B cell (primary cell): ENCODE measurements at regions of chr11 and their contacts with region 1.

Region 1: DNA sequence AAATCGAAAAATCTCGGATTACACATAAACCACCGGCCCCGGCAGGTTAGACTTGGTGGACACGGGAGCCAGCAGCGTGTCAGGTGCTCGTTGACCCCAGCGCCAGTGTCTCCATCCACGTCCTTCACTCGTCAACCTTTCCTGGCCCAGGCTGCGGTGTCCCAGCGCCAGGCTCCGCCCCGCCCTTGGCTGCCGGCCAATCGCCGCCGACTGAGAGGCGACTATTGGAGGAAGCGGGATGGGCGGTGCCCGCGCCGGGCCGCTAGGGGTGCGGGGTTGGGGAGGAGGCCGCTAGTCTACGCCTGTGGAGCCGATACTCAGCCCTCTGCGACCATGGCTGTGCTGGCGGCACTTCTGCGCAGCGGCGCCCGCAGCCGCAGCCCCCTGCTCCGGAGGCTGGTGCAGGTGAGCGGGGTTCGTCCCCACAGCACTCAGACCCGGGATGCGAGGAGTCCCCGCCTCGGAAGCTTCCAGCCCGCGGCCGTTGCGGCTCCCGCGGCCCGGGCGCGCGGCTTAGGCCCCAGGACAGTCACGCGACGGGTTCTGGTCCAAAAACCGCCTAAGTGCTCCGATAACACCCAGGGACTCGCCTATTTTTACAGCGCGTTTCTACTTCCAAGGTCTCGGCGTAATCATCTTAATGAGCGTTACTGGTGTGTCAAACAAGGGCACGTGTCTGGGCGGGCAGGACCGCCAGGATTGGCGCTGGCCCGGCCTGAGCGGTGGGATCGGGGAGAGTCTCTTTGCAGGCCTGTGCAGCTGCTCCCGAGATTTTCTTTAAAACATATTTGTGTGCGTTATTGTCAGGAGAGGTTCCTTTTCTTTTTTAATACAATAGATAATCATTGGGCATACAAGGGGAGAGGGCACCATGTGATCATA is at the start of gene ACAT1:
- DNase-seq: peak; percentile 92
- ATAC-seq: peak; percentile 100
- H3K4me3 ChIP-seq: peak within 1 kb of the TSS; percentile 60 to 93 (median 86)
- H3K4me3 Mint-ChIP-seq: peak within 1 kb of the TSS; percentile 92
- H3K27ac ChIP-seq: peak within 1 kb of the TSS; percentile 46 to 53
- H3K27ac Mint-ChIP-seq: peak within 1 kb of the TSS; percentile 78
- H3K4me1 ChIP-seq: peaks cover 17 to 26% of the 10 kb centered on the region in 2 donors
- H3K4me1 Mint-ChIP-seq: peaks cover 34% of the 10 kb centered on the region
- H3K27me3 ChIP-seq: no peaks in the 10 kb centered on the region
- H3K27me3 Mint-ChIP-seq: no peaks in the 10 kb centered on the region
- CTCF ChIP-seq: peak; percentile 36
- total RNA-seq, gene ACAT1: 31.1 and 32.9 TPM in 2 replicates

Region 2: GRCh38 chr11:107928046-107928766 is 193.3 kb before region 1 on chr11 and contains the start of gene RAB39A:
- CTCF ChIA-PET with region 1: no interaction called
- POLR2A ChIA-PET with region 1: no interaction called
- intact Hi-C with region 1: loop called (anchors 2 kb)
- DNase-seq: peak; percentile 94
- ATAC-seq: peak; percentile 85
- H3K4me3 ChIP-seq: peak within 1 kb of the TSS; percentile 44 to 89 (median 74)
- H3K4me3 Mint-ChIP-seq: peak within 1 kb of the TSS; percentile 88
- H3K27ac ChIP-seq: peak within 1 kb of the TSS; percentile 37 to 52
- H3K27ac Mint-ChIP-seq: peak within 1 kb of the TSS; percentile 88
- H3K4me1 ChIP-seq: peaks cover 16 to 19% of the 10 kb centered on the region in 2 donors
- H3K4me1 Mint-ChIP-seq: peaks cover 30% of the 10 kb centered on the region
- H3K27me3 ChIP-seq: peaks cover 0 to 3% (median 0%) of the 10 kb centered on the region in 4 experiments
- H3K27me3 Mint-ChIP-seq: peaks cover 5% of the 10 kb centered on the region
- CTCF ChIP-seq: no peak
- total RNA-seq, gene RAB39A: 2.4 TPM in 2 replicates

Region 3: DNA sequence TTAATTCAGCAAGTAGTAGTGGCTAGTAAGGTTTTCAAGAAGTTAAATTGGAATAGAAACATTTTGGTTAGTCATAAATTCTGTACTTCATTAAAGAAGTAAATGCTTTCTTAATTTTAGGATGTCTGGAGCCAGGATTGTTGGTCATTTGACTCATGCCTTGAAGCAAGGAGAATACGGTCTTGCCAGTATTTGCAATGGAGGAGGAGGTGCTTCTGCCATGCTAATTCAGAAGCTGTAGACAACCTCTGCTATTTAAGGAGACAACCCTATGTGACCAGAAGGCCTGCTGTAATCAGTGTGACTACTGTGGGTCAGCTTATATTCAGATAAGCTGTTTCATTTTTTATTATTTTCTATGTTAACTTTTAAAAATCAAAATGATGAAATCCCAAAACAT is 25.6 kb after region 1 on chr11:
- CTCF ChIA-PET with region 1: interaction called, 3 read pairs
- POLR2A ChIA-PET with region 1: interaction called, 10 read pairs
- intact Hi-C with region 1: no loop called
- DNase-seq: no peak
- ATAC-seq: no peak
- H3K4me3 ChIP-seq: no peak overlapping the region
- H3K4me3 Mint-ChIP-seq: no peak overlapping the region
- H3K27ac ChIP-seq: no peak overlapping the region
- H3K27ac Mint-ChIP-seq: no peak overlapping the region
- H3K4me1 ChIP-seq: no peaks in the 10 kb centered on the region
- H3K4me1 Mint-ChIP-seq: no peaks in the 10 kb centered on the region
- H3K27me3 ChIP-seq: no peaks in the 10 kb centered on the region
- H3K27me3 Mint-ChIP-seq: no peaks in the 10 kb centered on the region
- CTCF ChIP-seq: no peak

Region 4: DNA sequence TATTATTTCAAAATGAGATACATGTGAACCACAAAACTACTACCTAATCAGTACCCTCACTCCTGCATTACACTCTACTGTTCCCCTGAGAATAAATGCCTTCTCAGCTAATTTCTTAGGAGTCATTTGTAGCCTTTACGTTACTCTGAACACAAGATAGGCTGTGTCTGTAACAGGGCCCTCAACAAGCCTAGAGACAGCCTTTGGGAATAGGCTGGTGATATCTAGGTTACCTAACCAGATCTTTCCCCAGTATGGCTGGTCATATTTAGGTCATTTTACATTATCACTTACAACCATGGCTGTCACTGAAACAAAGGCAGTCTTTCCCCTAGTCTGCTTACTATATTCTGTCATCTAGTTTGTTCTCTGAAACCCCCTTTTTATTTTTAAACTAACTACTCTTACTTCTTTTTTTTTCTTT is 115.6 kb after region 1 on chr11:
- CTCF ChIA-PET with region 1: no interaction called
- POLR2A ChIA-PET with region 1: no interaction called
- intact Hi-C with region 1: loop called (anchors 5 kb)
- DNase-seq: peak; percentile 52
- ATAC-seq: peak; percentile 26
- H3K4me3 ChIP-seq: peak overlapping the region in 3 of 5 experiments; percentile 11 to 57 (median 33)
- H3K4me3 Mint-ChIP-seq: peak overlapping the region; percentile 72
- H3K27ac ChIP-seq: peak overlapping the region; percentile 83 to 90
- H3K27ac Mint-ChIP-seq: peak overlapping the region; percentile 86
- H3K4me1 ChIP-seq: peaks cover 27 to 45% of the 10 kb centered on the region in 2 donors
- H3K4me1 Mint-ChIP-seq: peaks cover 43% of the 10 kb centered on the region
- H3K27me3 ChIP-seq: no peaks in the 10 kb centered on the region
- H3K27me3 Mint-ChIP-seq: no peaks in the 10 kb centered on the region
- CTCF ChIP-seq: no peak

Region 5: DNA sequence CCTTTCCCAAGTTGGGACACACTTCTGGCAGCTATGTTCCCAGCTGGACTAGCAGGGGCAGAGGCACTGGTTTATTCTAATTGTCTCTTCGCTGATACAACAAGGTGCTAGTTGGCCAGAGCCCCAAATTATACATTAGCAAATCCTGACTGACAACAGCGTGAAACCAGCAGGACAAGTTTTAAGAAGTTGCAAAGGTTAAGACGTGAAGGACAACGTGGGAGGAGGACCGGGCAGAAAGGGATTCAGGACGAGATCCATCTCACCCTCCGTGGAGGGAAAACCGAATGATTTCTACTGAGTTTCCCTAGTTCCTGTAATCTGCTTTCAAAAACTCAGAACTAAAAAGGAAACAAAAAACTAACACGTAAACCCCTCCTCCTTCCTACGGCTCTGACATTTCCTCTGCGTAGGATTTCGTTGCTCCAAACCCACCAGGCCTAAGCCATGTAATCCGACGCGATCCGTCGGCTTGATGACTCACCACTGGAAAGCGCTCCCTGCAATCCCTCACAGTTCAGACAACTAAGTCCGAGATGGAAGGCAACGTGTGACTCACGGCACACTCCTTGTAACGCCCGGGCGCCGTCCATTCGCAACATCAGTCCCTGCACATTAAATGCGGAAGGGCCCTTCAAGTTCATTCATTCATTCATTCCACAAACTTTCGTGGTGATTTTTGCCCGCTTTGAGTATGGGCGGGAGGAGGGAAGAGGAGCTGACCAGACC is 376.0 kb after region 1 on chr11:
- CTCF ChIA-PET with region 1: no interaction called
- POLR2A ChIA-PET with region 1: no interaction called
- intact Hi-C with region 1: loop called (anchors 10 kb)
- DNase-seq: peak; percentile 80
- ATAC-seq: peak; percentile 67
- H3K4me3 ChIP-seq: peak overlapping the region; percentile 71 to 93 (median 80)
- H3K4me3 Mint-ChIP-seq: peak overlapping the region; percentile 100
- H3K27ac ChIP-seq: peak overlapping the region; percentile 71 to 80
- H3K27ac Mint-ChIP-seq: peak overlapping the region; percentile 98
- H3K4me1 ChIP-seq: peaks cover 0 to 7% of the 10 kb centered on the region in 2 donors
- H3K4me1 Mint-ChIP-seq: peaks cover 13% of the 10 kb centered on the region
- H3K27me3 ChIP-seq: no peaks in the 10 kb centered on the region
- H3K27me3 Mint-ChIP-seq: no peaks in the 10 kb centered on the region
- CTCF ChIP-seq: no peak

Region 6: GRCh38 chr11:108664730-108665525 is 543.4 kb after region 1 on chr11 and contains the start of gene DDX10:
- CTCF ChIA-PET with region 1: interaction called, 4 read pairs
- POLR2A ChIA-PET with region 1: no interaction called
- intact Hi-C with region 1: loop called (anchors 1 kb)
- DNase-seq: peak; percentile 99
- ATAC-seq: peak; percentile 100
- H3K4me3 ChIP-seq: peak within 1 kb of the TSS; percentile 69 to 94 (median 85)
- H3K4me3 Mint-ChIP-seq: peak within 1 kb of the TSS; percentile 98
- H3K27ac ChIP-seq: peak within 1 kb of the TSS; percentile 52 to 76
- H3K27ac Mint-ChIP-seq: peak within 1 kb of the TSS; percentile 92
- H3K4me1 ChIP-seq: peaks cover 30 to 32% of the 10 kb centered on the region in 2 donors
- H3K4me1 Mint-ChIP-seq: peaks cover 54% of the 10 kb centered on the region
- H3K27me3 ChIP-seq: no peaks in the 10 kb centered on the region
- H3K27me3 Mint-ChIP-seq: peaks cover 5% of the 10 kb centered on the region
- CTCF ChIP-seq: no peak
- total RNA-seq, gene DDX10: 30.6 and 35.8 TPM in 2 replicates